ENCODE measurements at regions of chr4 and their contacts with region 1.

Region 1: DNA sequence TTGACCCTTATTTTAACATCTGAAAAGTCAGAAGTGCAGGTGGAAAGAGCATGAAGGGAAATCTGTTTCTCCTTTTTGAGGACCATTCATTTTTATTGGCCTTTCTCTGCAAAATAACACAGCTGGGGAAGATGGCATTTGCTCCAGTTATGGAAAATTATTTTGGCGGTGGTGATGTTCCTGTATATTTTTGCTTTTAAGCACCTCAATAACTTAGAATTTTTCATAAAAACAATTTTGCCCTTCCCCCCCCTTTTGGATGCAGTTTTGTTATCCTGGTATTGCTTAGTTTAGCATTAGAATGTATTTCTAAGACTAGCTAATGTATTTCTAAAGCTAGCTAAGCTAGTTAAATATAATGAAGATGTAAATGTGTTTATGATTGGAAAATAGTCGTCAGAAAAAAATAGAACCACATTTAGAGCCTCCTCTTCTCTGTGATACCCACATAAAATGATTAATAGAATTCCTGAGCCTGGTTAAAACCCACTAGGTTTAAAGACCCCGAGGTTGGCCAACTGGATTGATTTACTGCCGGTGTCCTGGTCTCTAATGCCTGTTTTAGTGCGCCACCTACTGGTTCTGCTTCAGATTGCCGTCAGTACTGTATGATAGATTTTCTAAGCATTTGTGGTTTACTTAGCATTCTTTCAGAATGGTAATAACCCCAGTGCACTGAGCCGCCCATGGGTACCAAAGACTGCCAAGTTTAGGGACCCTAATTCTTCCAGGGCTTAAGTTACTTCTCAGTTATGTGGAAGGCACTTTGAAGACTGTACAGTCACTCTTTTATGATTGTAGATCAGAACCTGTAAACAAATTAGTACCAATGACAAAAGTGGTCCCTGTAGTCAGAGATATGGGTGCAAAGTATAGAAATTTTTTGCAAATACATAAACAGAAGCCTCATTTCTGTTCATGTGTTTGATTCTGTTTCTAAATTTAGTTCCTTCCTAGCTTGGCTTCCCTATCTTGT is 11.4 kb downstream of the KLF3 start:
- DNase-seq: peak; percentile 91
- ATAC-seq: peak; percentile 55
- H3K4me3 Mint-ChIP-seq: peak overlapping the region; percentile 47
- H3K27ac Mint-ChIP-seq: peak overlapping the region; percentile 30
- H3K4me1 Mint-ChIP-seq: peaks cover 84% of the 10 kb centered on the region
- H3K27me3 Mint-ChIP-seq: no peaks in the 10 kb centered on the region

Region 2: GRCh38 chr4:38062088-38062893 is 613.1 kb before region 1 on chr4:
- CTCF ChIA-PET with region 1: interaction called, 6 read pairs
- POLR2A ChIA-PET with region 1: no interaction called
- intact Hi-C with region 1: loop called (anchors 1 kb)
- DNase-seq: peak; percentile 82
- ATAC-seq: peak; percentile 79
- H3K4me3 Mint-ChIP-seq: peak overlapping the region; percentile 75
- H3K27ac Mint-ChIP-seq: peak overlapping the region; percentile 87
- H3K4me1 Mint-ChIP-seq: peaks cover 14% of the 10 kb centered on the region
- H3K27me3 Mint-ChIP-seq: no peaks in the 10 kb centered on the region

Region 3: GRCh38 chr4:38523524-38524448 is 151.6 kb before region 1 on chr4:
- CTCF ChIA-PET with region 1: interaction called, 5 read pairs
- POLR2A ChIA-PET with region 1: no interaction called
- intact Hi-C with region 1: loop called (anchors 2 to 5 kb)
- DNase-seq: peak; percentile 76
- ATAC-seq: peak; percentile 88
- H3K4me3 Mint-ChIP-seq: peak overlapping the region; percentile 9
- H3K27ac Mint-ChIP-seq: peak overlapping the region; percentile 58
- H3K4me1 Mint-ChIP-seq: peaks cover 20% of the 10 kb centered on the region
- H3K27me3 Mint-ChIP-seq: peaks cover 4% of the 10 kb centered on the region

Region 4: GRCh38 chr4:38663801-38664705 is 11.4 kb before region 1 on chr4 and contains the start of gene KLF3:
- CTCF ChIA-PET with region 1: interaction called, 11 read pairs
- POLR2A ChIA-PET with region 1: interaction called, 3 read pairs
- intact Hi-C with region 1: no loop called
- DNase-seq: peak; percentile 84
- ATAC-seq: peak; percentile 62
- H3K4me3 Mint-ChIP-seq: peak within 1 kb of the TSS; percentile 88
- H3K27ac Mint-ChIP-seq: peak within 1 kb of the TSS; percentile 78
- H3K4me1 Mint-ChIP-seq: peaks cover 61% of the 10 kb centered on the region
- H3K27me3 Mint-ChIP-seq: no peaks in the 10 kb centered on the region
- total RNA-seq, gene KLF3: 6.1 to 6.2 TPM

Region 5: DNA sequence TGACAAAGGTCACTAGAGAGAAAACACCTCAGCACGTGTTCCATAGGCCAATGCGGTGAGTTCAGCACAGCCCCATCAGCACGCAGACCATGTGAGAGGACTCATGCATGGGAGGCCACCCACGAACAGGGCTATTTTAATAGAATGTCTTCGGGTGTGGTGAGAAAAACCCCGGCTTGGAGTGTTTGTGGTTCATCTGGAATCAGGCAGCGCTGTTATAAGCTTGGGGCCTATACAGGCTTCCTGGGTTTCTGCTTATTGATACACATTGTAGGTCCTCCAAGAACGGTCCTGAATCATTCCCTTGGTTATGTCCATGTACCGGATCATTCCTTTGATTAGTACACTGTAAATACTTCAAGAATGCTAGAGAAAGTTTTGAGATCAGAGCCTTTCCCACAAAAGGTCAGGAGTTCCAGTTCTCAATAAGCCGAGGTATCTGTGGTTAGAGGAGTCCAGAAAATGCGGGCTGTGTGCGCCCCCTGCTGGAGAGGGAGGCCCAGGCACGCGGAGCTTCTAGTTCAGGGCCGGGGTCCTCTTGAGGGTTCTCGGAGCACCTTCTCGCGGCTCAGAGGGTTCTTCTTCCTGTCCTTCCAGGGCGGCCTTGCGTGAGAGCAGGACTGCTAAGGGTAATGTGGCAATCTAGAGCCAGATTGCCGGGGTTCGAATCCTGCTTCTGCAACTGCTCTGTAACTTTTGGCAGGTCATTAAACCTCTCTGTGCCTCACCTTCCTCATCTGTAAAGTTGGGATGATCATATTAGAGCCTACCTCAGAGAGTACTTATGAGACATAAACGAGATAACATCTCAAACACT is 55.6 kb after region 1 on chr4:
- CTCF ChIA-PET with region 1: interaction called, 9 read pairs
- POLR2A ChIA-PET with region 1: no interaction called
- intact Hi-C with region 1: loop called (anchors 1 to 5 kb)
- DNase-seq: peak; percentile 91
- ATAC-seq: peak; percentile 80
- H3K4me3 Mint-ChIP-seq: no peak overlapping the region
- H3K27ac Mint-ChIP-seq: no peak overlapping the region
- H3K4me1 Mint-ChIP-seq: peaks cover 15% of the 10 kb centered on the region
- H3K27me3 Mint-ChIP-seq: no peaks in the 10 kb centered on the region

Measured in activated CD4-positive, alpha-beta T cell treated with anti-CD3 and anti-CD28 coated beads for 36 hours (primary cell).